HCT116 (cell line): ENCODE measurements at regions of chr10 and their contacts with region 1.

Region 1: DNA sequence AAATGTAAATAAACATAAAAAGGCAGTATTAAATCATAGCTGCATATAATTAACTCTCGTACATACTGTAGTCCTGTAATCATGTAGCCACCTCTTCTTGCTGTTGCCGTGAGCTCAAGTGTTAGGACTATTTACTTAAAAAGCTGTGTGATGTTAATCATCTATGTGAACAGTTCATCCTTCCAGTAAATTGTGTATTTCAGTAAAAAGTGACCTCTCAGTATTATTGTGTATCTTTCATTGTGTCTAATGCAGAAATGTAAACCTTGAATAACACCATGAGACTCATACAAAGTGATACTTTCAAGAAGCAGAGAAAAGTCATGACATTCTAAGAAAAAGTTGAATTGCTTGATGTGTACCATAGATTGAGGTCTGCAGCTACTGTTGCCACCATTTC is 38.0 kb downstream of the ADD3 start:
- DNase-seq: no peak
- ATAC-seq: no peak
- H3K4me3 ChIP-seq: no peak overlapping the region
- H3K27ac ChIP-seq: no peak overlapping the region
- H3K4me1 ChIP-seq: no peaks in the 10 kb centered on the region
- H3K27me3 ChIP-seq: no peaks in the 10 kb centered on the region
- CTCF ChIP-seq: no peak
- POLR2A ChIP-seq: no peak
- RAD21 ChIP-seq: no peak

Region 2: DNA sequence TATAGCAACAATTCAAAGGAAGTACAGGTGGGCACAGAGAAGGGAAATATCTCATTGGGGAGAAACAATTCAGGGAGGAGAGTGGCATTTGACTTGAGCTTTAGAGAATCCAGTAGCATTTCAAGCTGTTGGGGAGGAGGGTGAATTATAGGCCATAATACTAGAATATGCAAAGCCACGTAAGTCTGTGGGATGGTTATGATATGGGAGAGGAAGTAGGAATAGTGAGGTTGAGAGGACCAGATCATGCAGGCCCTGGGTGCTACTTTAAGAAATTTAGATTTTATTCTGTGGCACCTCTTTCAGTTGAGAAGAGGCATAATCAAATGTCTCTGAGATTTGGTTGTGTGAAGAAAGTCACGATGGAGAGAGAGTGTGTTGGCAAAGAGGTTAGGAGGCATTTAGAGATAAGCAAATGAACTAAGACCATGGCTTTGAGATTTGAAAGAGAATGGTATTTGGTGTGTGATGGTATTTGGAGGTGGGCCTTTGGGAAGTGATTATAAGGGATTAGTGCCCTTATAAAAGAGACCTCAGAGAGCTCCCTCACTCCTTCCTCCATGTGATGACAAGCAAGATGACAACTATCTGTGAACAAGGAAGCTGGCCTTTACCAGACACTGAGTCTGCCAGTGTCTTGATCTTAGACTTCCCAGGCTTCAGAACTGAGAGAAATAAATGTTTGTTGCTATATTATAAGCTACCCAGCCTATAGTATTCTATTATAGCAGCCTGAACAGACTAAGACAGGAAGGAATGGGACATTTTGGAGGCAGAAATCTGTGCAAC is 22.9 kb before region 1 on chr10:
- CTCF ChIA-PET with region 1: no interaction called
- POLR2A ChIA-PET with region 1: no interaction called
- RAD21 ChIA-PET with region 1: no interaction called
- intact Hi-C with region 1: no loop called
- DNase-seq: no peak
- ATAC-seq: no peak
- H3K4me3 ChIP-seq: no peak overlapping the region
- H3K27ac ChIP-seq: no peak overlapping the region
- H3K4me1 ChIP-seq: no peaks in the 10 kb centered on the region
- H3K27me3 ChIP-seq: no peaks in the 10 kb centered on the region
- CTCF ChIP-seq: no peak
- POLR2A ChIP-seq: no peak
- RAD21 ChIP-seq: no peak

Region 3: GRCh38 chr10:110035070-110035921 is 10.5 kb before region 1 on chr10:
- CTCF ChIA-PET with region 1: interaction called, 10 read pairs
- POLR2A ChIA-PET with region 1: no interaction called
- RAD21 ChIA-PET with region 1: no interaction called
- intact Hi-C with region 1: no loop called
- DNase-seq: no peak
- ATAC-seq: peak; percentile 54
- H3K4me3 ChIP-seq: no peak overlapping the region
- H3K27ac ChIP-seq: no peak overlapping the region
- H3K4me1 ChIP-seq: no peaks in the 10 kb centered on the region
- H3K27me3 ChIP-seq: no peaks in the 10 kb centered on the region
- CTCF ChIP-seq: peak; percentile 17 to 48 (median 26); a peak in 4 of 6 replicates
- POLR2A ChIP-seq: no peak
- RAD21 ChIP-seq: peak; percentile 30; the same call in 1 of the 2 replicates